Mammary epithelial cell (primary cell): ENCODE measurements at regions of chr5 and their contacts with region 1.

Region 1: DNA sequence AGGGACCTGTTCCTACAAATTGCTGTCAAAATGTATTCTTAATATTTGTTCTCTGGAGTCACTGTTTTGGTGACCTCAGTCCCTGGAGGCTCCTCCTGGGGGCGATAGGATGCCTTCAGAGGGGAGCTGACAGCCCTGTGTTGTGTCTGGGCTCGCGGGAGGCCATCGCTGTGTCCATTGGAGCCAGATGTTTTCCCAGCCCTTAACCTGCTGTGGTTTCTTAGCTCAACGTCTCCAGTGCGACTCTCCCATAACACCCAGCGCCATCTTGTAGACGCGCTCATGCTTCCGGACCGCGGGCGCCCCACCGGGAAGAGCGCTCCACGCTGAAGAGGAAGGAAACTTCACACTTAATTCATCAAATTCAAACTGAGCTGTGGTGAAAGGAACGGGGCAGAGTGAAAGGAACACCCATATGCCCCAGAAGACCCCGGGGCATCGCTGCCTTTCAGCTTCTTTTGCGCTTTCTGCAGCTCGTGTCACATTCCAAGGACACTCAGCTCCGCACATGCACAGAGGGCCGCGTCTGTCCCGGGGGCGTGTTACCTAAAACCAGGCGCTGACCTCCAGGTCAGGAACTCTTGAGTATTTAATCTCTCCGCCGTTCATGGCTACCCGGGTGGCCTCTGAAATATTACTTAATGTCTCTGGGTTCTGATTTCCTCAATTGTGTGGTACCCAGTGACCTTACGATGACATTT is 112.3 kb upstream of the GDNF start:
- DNase-seq: no peak
- H3K4me3 ChIP-seq: no peak overlapping the region
- H3K27ac ChIP-seq: no peak overlapping the region
- H3K4me1 ChIP-seq: peaks cover 7% of the 10 kb centered on the region
- H3K27me3 ChIP-seq: no peaks in the 10 kb centered on the region
- CTCF ChIP-seq: no peak

Region 2: GRCh38 chr5:38051711-38052511 is 99.7 kb after region 1 on chr5:
- CTCF ChIA-PET with region 1: no interaction called
- dilution Hi-C with region 1: loop called (anchors 5 kb)
- in situ Hi-C with region 1: no loop called
- intact Hi-C with region 1: no loop called
- DNase-seq: no peak
- H3K4me3 ChIP-seq: no peak overlapping the region
- H3K27ac ChIP-seq: no peak overlapping the region
- H3K4me1 ChIP-seq: no peaks in the 10 kb centered on the region
- H3K27me3 ChIP-seq: no peaks in the 10 kb centered on the region
- CTCF ChIP-seq: no peak